Left lung (tissue), 14 donors: ENCODE measurements at regions of chr3 and their contacts with region 1.

Region 1: GRCh38 chr3:51501833-51502561 is 2.2 kb upstream of the DCAF1 start:
- DNase-seq: peak; percentile 64 to 89 (median 80)
- ATAC-seq: peak; percentile 30
- H3K4me3 ChIP-seq: no peak overlapping the region
- H3K27ac ChIP-seq: no peak overlapping the region
- H3K4me1 ChIP-seq: peaks cover 0 to 21% of the 10 kb centered on the region in 2 donors
- H3K27me3 ChIP-seq: no peaks in the 10 kb centered on the region
- CTCF ChIP-seq: peak; percentile 93 to 96

Region 2: DNA sequence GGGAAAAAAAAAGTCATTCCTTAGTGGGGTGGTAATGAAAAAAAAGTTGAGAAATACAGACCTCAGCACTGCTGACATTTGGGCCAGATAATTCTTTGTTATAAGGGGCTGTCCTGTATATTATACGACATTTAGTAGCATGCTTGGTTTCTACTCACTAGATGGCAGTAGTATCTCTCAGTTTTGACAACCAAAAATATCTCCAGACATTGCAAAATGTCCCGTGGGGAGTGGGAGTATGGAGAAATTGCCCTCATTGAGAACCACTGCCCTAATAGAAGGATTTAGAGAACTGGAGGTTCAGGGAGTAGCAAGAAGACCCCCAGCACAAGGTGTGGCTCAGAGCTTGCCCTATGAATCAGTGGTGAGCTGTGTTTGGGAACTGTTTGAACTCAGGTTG is 140.5 kb after region 1 on chr3:
- intact Hi-C with region 1: loop called in 1 of 2 experiments (anchors 10 kb)
- DNase-seq: no peak
- ATAC-seq: no peak
- H3K4me3 ChIP-seq: no peak overlapping the region
- H3K27ac ChIP-seq: no peak overlapping the region
- H3K4me1 ChIP-seq: no peaks in the 10 kb centered on the region
- H3K27me3 ChIP-seq: no peaks in the 10 kb centered on the region
- CTCF ChIP-seq: no peak

Region 3: GRCh38 chr3:51682079-51682478 is 180.1 kb after region 1 on chr3:
- intact Hi-C with region 1: loop called in 1 of 2 experiments (anchors 5 kb)
- DNase-seq: peak in 3 of 4 donors; percentile 57 to 79 (median 59)
- ATAC-seq: peak; percentile 92
- H3K4me3 ChIP-seq: no peak overlapping the region
- H3K27ac ChIP-seq: peak overlapping the region in 1 of 2 donors; percentile 67
- H3K4me1 ChIP-seq: peaks cover 20 to 61% of the 10 kb centered on the region in 2 donors
- H3K27me3 ChIP-seq: no peaks in the 10 kb centered on the region
- CTCF ChIP-seq: peak; percentile 71 to 92

Region 4: GRCh38 chr3:51799879-51800749 is 298.1 kb after region 1 on chr3:
- intact Hi-C with region 1: loop called in 1 of 2 experiments (anchors 10 kb)
- DNase-seq: peak in 2 of 4 donors; percentile 36 to 54
- ATAC-seq: peak; percentile 82
- H3K4me3 ChIP-seq: no peak overlapping the region
- H3K27ac ChIP-seq: no peak overlapping the region
- H3K4me1 ChIP-seq: no peaks in the 10 kb centered on the region
- H3K27me3 ChIP-seq: peaks cover 3 to 35% of the 10 kb centered on the region in 2 donors
- CTCF ChIP-seq: peak; percentile 57 to 76